ENCODE measurements at regions of chr12 and their contacts with region 1.

Region 1: DNA sequence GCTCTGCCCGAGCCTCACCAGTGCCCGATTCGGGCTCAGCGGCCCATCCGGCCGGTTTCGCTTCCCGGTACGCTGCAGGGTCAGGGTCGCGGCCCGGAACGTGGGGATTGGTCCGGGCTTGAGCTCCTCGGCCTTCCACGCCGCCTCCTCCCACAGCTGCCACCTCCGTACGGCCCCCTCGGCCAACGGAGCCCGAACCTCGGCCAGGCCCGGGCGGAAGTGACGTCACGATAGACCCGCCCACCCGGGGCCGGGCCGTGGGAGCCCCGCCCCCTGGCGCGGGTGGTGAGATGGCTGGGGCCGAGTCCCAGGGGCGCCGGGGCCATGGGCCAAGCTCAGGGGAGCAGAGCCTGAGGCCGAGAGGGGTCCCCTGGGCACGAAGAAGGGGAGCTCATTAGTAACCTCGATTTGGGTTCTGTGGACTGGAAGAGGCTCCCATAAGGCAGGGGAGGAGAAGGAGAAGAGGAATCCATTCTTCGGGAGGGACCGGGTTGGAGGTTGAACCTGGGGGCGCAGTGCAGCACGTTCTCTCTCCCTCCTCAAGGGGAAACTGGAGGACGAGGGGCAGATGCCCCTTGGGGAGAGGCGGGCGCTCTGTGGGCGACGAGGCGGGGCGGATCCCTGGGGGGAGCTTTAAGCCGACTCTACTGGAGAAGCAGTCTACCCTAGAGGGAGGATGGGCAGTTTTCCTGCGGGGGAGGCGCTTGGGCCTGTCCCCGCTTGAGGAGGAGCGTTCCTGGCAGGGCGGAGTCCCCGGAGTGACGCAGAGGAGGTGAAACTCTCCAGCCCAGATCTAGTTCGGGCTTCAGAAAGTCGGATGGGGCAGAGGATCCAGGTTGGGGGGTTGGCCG is at the start of gene MLF2:
- DNase-seq: peak; percentile 99
- H3K4me3 ChIP-seq: peak within 1 kb of the TSS; percentile 66 to 95 (median 83)
- H3K27ac ChIP-seq: peak within 1 kb of the TSS; percentile 99
- H3K4me1 ChIP-seq: peaks cover 18 to 34% (median 24%) of the 10 kb centered on the region in 4 donors
- H3K27me3 ChIP-seq: no peaks in the 10 kb centered on the region
- CTCF ChIP-seq: peak in 2 of 3 experiments; percentile 97 to 98
- EP300 ChIP-seq: no peak
- POLR2A ChIP-seq: peak; percentile 92
- total RNA-seq, gene MLF2: 169 to 247 (median 214) TPM

Region 2: DNA sequence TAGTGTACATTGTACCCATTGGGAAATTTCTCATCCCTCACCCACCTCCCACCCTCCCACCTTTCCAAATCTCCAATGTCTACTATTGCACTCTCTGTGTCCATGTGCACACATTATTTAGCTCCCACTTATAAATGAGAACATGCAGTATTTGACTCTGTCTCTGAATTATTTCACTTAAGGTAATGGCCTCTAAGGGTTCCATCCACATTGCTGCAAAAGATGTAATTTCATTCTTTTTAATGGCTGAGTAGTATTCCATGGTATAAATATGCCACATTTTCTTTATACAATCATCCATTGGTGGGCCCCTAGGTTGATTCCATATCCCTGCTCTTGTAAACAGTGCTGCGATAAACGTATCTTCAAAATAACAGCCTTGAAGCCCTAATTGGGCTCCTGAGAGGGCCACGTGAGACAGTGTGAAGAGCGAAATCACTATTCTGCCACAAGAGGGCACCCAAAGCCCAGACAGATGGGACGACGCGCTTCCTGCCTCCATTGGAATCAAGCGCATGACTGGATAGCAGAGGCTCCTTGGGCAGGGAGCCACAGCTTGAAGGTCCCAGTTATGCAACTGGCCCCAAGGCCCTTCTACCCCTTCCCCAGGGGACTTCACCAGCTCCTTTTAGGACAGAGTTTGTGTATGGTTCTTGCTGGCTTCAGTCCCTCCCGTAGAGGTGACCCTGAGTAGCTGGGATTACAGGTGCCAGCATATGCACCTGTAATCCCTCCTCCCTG is 329.7 kb before region 1 on chr12:
- intact Hi-C with region 1: no loop called
- DNase-seq: no peak
- H3K4me3 ChIP-seq: no peak overlapping the region
- H3K27ac ChIP-seq: peak overlapping the region; percentile 10 to 73 (median 43)
- H3K4me1 ChIP-seq: peaks cover 0 to 24% (median 18%) of the 10 kb centered on the region in 4 donors
- H3K27me3 ChIP-seq: no peaks in the 10 kb centered on the region
- CTCF ChIP-seq: peak; percentile 89 to 97 (median 89)
- EP300 ChIP-seq: no peak
- POLR2A ChIP-seq: no peak

Region 3: DNA sequence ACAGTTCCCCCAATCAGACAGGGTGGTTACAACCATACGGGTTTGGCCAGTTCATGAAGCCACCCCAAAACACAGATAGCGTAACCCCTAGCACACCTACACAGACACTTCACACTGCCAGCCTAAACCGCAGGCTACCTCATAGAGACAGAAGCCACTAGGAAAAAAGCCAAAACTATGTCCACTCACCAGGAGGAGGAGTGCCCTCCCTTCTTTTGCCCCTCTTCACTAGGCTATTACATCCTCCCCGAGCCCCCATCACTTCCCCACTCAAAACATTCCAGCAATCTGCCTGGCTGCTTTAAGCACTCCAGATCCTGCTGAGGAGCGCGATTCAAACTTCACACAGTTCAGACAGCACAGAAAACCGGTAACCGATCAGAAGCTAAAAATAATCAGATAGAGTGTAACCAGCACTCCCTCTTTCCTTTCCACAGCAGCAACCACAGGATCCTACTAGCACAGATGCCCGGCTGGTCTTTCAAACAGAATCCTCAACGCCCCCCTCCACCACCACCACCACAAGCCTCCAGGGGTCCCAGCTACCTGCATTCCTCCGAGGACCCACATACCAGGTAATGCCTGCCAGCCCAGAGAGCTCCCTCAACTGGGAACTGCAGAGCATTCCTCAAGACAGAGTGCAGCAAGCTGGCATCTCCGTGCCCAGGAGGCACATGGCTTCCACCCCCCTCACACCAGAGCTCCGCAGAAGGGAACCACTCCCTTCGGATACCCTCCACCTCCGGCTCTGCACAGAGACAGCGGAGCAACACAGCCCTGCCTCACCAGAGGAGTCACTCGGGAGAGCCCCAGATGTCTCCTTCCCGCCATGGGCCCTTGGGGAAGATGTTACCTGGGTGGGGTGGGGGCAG is 147.5 kb before region 1 on chr12:
- intact Hi-C with region 1: no loop called
- DNase-seq: no peak
- H3K4me3 ChIP-seq: peak overlapping the region; percentile 83 to 98 (median 95)
- H3K27ac ChIP-seq: peak overlapping the region; percentile 95 to 99 (median 99)
- H3K4me1 ChIP-seq: peaks cover 42 to 56% (median 50%) of the 10 kb centered on the region in 4 donors
- H3K27me3 ChIP-seq: no peaks in the 10 kb centered on the region
- CTCF ChIP-seq: no peak
- EP300 ChIP-seq: no peak
- POLR2A ChIP-seq: no peak

Region 4: GRCh38 chr12:6766651-6767349 is 13.7 kb after region 1 on chr12:
- intact Hi-C with region 1: loop called (anchors 1 kb)
- DNase-seq: no peak
- H3K4me3 ChIP-seq: peak overlapping the region; percentile 63 to 93 (median 78)
- H3K27ac ChIP-seq: peak overlapping the region; percentile 95 to 100 (median 96)
- H3K4me1 ChIP-seq: peaks cover 54 to 80% (median 75%) of the 10 kb centered on the region in 4 donors
- H3K27me3 ChIP-seq: no peaks in the 10 kb centered on the region
- CTCF ChIP-seq: peak; percentile 78 to 89 (median 79)
- EP300 ChIP-seq: no peak
- POLR2A ChIP-seq: peak; percentile 8

Region 5: DNA sequence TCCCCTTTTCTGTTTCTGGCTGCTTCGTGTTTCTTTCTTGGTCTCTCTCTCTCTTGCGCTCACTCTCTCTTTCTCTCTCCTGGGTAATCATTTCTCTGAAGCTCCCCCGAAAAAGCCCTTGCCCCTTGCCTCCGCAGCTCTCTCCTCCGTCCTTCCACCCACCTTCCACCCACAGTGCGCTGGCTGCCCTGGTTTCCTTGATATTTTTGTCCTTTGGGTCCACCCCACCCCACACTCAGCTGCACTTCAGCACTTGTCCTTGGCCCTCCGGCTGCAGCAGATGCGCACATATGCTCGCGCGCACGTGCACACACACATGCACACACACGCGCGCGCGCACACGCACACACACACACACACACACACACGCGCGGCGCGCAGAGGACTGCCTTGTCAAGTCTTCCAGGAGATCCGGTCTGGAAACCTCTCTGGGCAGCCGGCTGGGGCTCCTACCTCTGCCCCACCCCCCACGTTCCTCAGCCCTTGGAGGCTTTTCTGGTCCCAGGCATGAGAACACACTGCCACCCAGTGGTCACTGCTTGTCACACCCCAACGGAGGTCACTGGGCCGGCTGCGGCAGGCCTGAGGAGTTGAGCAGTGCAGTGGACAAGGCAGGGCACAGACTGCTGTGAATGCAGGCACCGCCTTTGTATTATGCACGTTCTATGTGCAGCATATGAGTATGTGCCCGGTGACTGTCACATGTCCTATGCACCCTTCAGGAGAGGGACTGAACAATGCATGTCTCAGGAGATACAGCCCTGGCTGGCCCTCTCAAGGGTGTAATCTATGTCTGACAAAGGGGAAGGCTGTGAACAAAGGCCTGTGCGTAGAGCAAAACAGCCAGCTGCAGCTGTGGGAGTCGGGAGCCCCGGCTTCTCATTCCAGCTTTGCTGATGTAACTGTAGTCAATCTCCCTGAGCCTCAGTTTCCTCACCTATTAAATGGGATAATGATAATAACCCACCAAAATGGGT is 25.7 kb after region 1 on chr12:
- intact Hi-C with region 1: loop called (anchors 2 kb)
- DNase-seq: peak; percentile 98
- H3K4me3 ChIP-seq: peak overlapping the region; percentile 50 to 55 (median 52)
- H3K27ac ChIP-seq: peak overlapping the region; percentile 83 to 92 (median 87)
- H3K4me1 ChIP-seq: peaks cover 15 to 29% (median 27%) of the 10 kb centered on the region in 4 donors
- H3K27me3 ChIP-seq: no peaks in the 10 kb centered on the region
- CTCF ChIP-seq: peak; percentile 95 to 98 (median 96)
- EP300 ChIP-seq: no peak
- POLR2A ChIP-seq: no peak

Region 6: DNA sequence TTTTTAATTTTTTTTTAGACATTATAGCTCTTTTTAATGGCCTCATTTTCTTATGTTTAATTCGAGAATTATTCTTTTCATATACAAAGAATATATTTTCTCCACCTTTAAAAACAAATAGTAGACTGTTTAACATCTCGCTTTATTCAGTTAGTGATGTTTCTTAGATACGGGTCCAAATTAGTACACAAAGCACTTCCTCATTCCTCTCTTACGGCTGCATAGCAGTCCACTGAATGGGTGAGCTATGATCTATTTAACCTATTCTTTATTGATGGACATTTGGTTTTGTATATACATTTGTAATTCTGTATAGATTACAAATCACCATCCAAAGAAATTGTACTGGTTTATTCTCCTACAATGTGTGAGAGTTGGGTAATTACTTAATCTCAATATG is 60.2 kb after region 1 on chr12:
- intact Hi-C with region 1: no loop called
- DNase-seq: no peak
- H3K4me3 ChIP-seq: no peak overlapping the region
- H3K27ac ChIP-seq: no peak overlapping the region
- H3K4me1 ChIP-seq: no peaks in the 10 kb centered on the region
- H3K27me3 ChIP-seq: peaks cover 0 to 5% (median 0%) of the 10 kb centered on the region in 4 donors
- CTCF ChIP-seq: no peak
- EP300 ChIP-seq: no peak
- POLR2A ChIP-seq: no peak

Region 7: DNA sequence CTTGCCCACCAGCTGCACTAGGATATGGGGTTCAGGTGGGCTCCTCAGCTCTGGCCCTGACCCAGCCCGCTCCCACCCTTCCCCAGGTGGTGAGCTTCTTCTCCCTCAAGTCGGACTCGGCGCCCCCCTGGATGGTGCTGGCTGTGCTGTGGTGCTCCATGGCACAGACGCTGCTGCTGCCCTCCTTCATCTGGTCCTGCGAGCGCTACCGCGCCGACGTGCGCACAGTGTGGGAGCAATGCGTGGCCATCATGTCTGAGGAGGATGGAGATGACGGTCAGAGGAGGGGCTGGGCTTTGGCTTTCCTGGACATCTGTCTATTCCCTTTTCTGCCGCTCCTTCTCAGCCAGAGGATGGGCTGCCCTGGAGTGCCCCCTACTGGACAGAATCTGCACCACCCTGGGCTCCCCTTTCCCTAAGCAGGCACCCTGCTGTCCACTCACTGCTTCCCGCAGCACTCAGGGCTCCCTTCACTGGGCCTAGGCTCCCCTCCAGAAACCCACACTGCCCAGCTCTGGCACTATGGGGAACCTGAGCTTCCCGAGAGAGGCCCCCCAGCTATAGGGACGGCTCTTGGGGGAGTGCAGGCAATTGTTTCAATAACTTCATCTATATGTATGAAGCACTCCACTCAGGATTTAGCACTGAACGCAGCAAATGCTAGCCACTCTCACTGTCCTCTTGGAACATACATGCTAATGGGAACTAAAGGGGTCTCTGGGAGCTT is 72.4 kb after region 1 on chr12:
- intact Hi-C with region 1: loop called (anchors 5 kb)
- DNase-seq: peak; percentile 97
- H3K4me3 ChIP-seq: peak overlapping the region; percentile 14 to 46 (median 26)
- H3K27ac ChIP-seq: peak overlapping the region in 2 of 4 donors; percentile 20 to 21
- H3K4me1 ChIP-seq: peaks cover 30 to 80% (median 74%) of the 10 kb centered on the region in 4 donors
- H3K27me3 ChIP-seq: peaks cover 0 to 38% (median 5%) of the 10 kb centered on the region in 4 donors
- CTCF ChIP-seq: peak; percentile 84 to 95 (median 92)
- EP300 ChIP-seq: no peak
- POLR2A ChIP-seq: no peak

Measured in esophagus muscularis mucosa (tissue), 4 donors.